Activated T-helper 2 cell treated with anti-CD3 and anti-CD28 coated beads, Interferon-gamma antibody, Interleukin-2, Interleukin-4, amounts not matched to agents 10 μg/mL and 5 μg/mL and 100 μg/mL, durations not matched to agents 14 hours and 24 hours and 36 hours (primary cell): ENCODE measurements at regions of chr16 and their contacts with region 1.

Region 1: DNA sequence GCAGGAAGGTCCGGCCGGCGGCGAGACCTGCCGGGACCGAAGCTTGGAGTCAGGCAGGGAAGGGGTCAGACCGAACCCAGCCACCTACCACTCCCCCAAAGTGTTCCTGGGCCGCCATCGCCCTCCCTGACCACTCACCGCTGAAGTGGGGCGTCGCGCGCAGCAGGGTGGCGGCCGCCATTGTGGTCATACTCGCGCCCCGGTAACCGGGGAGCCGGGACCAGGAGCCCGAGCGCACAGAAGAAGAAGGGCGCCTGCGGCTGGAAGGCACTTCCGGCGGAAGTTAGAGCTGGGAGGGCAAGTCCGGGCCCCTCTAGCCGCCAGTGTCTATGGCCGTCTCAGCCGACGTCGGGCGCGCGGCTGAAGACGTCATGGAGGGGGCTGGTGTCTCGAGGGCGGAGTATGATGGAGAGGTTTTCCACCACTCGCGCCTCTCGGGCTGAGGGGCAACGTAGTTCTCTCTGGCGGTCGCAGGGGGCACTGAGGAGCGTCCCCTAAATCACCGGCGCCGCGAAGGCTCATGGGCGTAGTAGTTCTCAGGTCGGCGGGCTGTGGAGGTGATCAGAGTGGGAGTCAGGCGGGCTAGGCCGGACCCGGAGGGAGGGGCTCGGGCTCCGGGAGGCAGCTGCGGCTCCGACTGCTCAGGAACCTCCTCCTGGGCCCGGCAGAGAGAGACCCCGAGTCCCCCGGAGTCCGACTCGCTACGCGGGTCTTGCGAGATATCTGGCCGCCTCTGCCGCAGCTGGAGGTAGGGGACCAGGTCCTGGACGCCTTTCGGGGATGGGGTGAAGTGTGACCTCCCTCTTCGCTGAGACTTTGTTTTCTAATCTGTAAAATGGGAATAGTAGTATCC is at the start of gene TUFM:
- DNase-seq: peak; percentile 98
- H3K4me3 Mint-ChIP-seq: peak within 1 kb of the TSS; percentile 93
- H3K27ac Mint-ChIP-seq: peak within 1 kb of the TSS; percentile 97
- H3K4me1 Mint-ChIP-seq: peaks cover 22% of the 10 kb centered on the region
- H3K27me3 Mint-ChIP-seq: no peaks in the 10 kb centered on the region
- total RNA-seq, gene TUFM: 202 and 217 TPM in 2 replicates

Region 2: DNA sequence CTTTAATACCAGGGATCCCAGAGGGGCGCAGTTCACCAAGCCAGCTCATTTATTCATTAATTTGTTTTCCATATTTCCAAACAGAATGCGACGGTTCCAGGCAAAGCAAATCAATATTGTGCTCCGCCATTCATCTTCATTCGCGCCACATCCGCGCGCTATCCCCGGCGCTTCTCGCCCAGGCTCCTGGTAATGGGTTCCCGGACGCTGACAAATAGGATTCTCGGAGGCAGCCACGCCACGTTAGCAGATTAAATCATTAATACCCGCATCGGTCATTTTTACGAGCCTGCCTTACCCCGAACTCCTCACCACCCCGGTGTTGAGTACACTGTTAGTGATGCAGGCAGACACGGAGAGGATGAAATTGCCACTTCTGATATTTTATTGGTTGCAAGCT is 1805.6 kb before region 1 on chr16:
- intact Hi-C with region 1: no loop called
- DNase-seq: no peak
- H3K4me3 Mint-ChIP-seq: no peak overlapping the region
- H3K27ac Mint-ChIP-seq: no peak overlapping the region
- H3K4me1 Mint-ChIP-seq: no peaks in the 10 kb centered on the region
- H3K27me3 Mint-ChIP-seq: peaks cover under 1% of the 10 kb centered on the region

Region 3: DNA sequence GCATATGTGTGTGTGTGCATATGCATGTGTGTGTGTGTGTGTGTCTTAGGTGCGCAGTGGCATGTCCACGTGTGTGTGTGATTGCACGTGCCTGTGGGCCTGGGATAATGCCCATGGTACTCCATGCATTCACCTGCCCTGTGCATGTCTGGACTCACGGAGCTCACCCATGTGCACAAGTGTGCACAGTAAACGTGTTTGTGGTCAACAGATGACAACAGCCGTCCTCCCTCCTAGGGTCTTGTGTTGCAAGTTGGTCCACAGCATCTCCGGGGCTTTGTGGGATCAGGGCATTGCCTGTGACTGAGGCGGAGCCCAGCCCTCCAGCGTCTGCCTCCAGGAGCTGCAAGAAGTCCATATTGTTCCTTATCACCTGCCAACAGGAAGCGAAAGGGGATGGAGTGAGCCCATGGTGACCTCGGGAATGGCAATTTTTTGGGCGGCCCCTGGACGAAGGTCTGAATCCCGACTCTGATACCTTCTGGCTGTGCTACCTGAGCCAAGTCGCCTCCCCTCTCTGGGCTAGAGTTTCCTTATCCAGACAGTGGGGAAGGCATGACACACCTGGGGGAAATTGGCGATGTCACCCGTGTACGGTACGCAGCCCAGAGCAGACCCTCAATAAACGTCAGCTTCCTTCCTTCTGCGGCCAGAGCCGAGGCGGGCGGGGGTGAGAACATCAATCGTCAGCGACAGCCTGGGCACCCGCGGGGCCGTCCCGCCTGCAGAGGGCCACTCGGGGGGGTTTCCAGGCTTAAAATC is 1396.7 kb before region 1 on chr16:
- intact Hi-C with region 1: no loop called
- DNase-seq: no peak
- H3K4me3 Mint-ChIP-seq: no peak overlapping the region
- H3K27ac Mint-ChIP-seq: peak overlapping the region; percentile 68
- H3K4me1 Mint-ChIP-seq: peaks cover 42% of the 10 kb centered on the region
- H3K27me3 Mint-ChIP-seq: no peaks in the 10 kb centered on the region

Region 4: DNA sequence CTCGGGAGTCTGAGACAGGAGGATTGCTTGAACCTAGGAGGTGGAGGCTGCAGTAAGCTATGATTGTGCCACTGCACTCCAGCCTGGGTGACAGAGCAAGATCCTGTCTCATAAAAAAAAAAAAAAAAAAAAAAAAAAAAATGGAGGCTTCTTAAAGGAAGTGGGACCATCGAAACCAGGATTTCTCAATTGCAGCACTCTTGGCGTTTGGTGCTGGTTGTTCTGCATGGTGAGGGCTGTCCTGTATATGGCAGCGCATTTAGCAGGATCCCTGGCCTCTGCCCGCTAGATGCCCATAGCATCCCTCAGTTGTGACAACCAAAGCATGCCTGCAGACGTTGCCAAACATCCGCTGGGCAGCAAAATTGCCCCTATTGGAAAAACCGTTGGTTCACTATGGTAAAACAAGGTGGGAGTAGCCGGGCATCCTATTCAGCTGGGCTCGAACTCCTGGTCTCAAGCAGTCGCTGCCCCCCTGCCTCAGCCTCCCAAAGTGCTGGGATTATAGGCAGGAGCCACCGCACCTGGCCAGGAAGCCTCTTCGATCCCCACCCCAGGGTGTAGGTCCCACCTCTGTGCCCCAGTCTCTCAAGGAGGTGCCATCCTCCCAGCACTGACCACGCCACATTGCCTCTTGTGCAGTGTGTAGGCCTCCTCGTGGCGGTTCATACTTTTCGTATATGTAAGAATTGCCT is 367.7 kb before region 1 on chr16:
- intact Hi-C with region 1: no loop called
- DNase-seq: no peak
- H3K4me3 Mint-ChIP-seq: no peak overlapping the region
- H3K27ac Mint-ChIP-seq: no peak overlapping the region
- H3K4me1 Mint-ChIP-seq: peaks cover 2% of the 10 kb centered on the region
- H3K27me3 Mint-ChIP-seq: no peaks in the 10 kb centered on the region

Region 5: GRCh38 chr16:28491970-28492474 is 354.3 kb before region 1 on chr16 and contains the start of gene CLN3:
- intact Hi-C with region 1: loop called (anchors 1 kb)
- DNase-seq: peak; percentile 88
- H3K4me3 Mint-ChIP-seq: peak within 1 kb of the TSS; percentile 92
- H3K27ac Mint-ChIP-seq: peak within 1 kb of the TSS; percentile 99
- H3K4me1 Mint-ChIP-seq: peaks cover 41% of the 10 kb centered on the region
- H3K27me3 Mint-ChIP-seq: no peaks in the 10 kb centered on the region
- total RNA-seq, gene CLN3: 26.5 and 30.1 TPM in 2 replicates

Region 6: DNA sequence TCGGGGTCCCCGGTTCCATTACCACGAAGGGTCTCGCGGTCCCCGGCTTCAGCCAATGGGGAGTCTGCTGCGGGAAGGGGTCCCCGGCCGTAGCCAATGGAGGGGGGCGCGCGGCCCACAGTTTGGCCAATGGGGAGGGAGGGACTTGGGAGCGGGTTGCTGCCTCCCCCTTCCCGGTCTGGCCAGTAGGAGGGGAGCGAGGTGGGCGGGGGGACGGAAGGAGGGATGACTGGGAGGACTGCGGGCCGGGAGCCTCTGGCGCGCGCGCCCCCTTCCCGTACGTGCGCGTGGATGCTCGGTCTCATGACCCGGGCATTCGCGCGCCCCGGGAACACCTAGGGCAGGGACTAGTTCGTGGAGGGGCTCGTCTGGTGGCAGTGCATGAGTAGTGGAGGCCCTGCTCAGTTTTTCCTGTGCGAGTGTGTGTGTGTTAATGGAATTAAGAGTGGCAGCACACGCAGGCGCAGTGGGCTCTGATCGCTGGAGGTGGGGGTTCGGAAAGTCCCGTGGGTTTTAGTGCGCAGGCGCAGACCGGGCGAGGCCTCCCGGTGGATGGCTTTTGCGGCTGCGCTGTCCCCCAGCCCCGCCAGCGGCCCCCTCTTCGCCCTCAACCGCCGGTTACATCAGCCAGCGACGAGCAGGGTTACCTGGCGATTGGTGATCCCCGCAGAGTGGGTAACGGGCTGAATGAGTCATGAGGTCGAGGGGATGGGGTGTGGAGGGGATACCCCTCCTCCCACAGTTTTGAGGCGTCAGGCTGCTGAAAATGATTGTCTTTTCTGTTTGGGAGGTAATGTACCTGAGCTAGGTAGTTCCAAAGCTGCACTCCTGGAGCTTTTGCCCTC is 22.2 kb before region 1 on chr16:
- intact Hi-C with region 1: loop called (anchors 1 kb)
- DNase-seq: peak; percentile 93
- H3K4me3 Mint-ChIP-seq: peak overlapping the region; percentile 99
- H3K27ac Mint-ChIP-seq: peak overlapping the region; percentile 100
- H3K4me1 Mint-ChIP-seq: peaks cover 31% of the 10 kb centered on the region
- H3K27me3 Mint-ChIP-seq: no peaks in the 10 kb centered on the region

Region 7: DNA sequence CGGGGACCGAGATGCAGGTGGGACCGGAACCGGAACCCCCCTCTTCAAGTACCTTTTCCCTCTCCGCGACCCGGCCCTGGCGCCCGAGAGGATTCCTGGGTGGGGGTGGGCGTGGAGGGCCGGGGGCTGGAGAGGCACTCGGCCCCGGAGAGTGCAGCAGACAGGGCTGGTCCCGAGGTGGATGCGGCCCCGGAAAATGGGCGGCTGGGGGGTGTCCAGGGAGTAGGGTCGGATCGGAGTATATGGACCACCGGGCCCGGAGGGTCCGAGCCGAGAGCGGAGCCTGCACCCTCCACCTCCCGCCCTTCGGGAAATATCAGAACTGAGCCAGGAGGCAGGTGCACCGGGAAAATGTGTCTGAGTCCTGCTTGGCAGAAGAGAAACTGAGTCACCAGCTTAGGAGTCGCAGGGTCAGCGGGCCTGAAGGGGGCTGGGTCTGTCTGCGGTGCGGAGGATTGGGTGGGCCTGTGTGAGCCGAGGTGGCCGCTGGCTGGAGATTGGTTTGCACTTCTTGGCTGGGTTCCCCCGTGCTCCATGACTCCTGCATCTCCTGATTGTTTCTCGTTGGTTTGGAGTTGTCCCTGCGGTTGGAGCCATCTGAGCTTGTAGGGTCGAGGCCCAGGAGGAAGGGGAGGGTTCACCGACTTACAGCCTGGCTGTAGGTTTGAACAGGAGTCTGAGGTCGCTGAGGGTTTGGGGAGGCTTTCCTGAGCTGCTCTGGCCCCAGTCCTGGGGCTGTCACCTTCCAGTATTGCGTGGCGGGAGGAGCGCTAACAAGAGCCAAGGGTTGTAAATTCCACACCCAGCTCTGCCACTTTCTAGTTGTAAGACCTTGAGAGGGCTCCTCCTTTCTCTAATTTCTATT is 17.9 kb after region 1 on chr16:
- intact Hi-C with region 1: loop called (anchors 1 kb)
- DNase-seq: peak; percentile 19
- H3K4me3 Mint-ChIP-seq: peak overlapping the region; percentile 96
- H3K27ac Mint-ChIP-seq: peak overlapping the region; percentile 98
- H3K4me1 Mint-ChIP-seq: peaks cover 8% of the 10 kb centered on the region
- H3K27me3 Mint-ChIP-seq: no peaks in the 10 kb centered on the region

Region 8: GRCh38 chr16:28924732-28925385 is 78.6 kb after region 1 on chr16 and contains the start of gene RABEP2:
- intact Hi-C with region 1: loop called (anchors 5 kb)
- DNase-seq: peak; percentile 93
- H3K4me3 Mint-ChIP-seq: peak within 1 kb of the TSS; percentile 95
- H3K27ac Mint-ChIP-seq: peak within 1 kb of the TSS; percentile 99
- H3K4me1 Mint-ChIP-seq: peaks cover 11% of the 10 kb centered on the region
- H3K27me3 Mint-ChIP-seq: no peaks in the 10 kb centered on the region
- total RNA-seq, gene RABEP2: 20.6 and 24.2 TPM in 2 replicates

Region 9: DNA sequence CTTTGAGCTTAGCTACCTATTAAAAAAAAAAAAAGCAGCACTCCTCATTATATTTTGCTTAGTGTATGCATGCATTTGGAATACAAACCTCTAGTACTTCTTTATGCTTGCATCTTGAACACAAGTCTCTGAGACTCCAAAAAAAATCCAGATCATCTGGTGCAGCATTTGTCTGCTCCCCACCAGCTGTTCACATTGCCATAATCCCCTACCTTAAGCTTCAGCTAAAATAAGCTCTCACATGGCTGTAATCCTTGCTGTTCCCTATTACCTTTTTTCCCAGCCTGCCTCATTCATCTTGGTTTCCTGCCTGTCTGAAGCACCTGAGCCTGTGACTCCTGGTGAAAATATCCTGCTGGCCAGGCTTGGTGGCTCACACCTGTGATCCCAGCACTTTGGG is 97.0 kb after region 1 on chr16:
- intact Hi-C with region 1: loop called (anchors 1 kb)
- DNase-seq: no peak
- H3K4me3 Mint-ChIP-seq: no peak overlapping the region
- H3K27ac Mint-ChIP-seq: no peak overlapping the region
- H3K4me1 Mint-ChIP-seq: peaks cover 13% of the 10 kb centered on the region
- H3K27me3 Mint-ChIP-seq: no peaks in the 10 kb centered on the region

Region 10: GRCh38 chr16:28950648-28951409 is 104.5 kb after region 1 on chr16 and contains the start of gene NFATC2IP:
- intact Hi-C with region 1: loop called (anchors 1 kb)
- DNase-seq: peak; percentile 100
- H3K4me3 Mint-ChIP-seq: peak within 1 kb of the TSS; percentile 92
- H3K27ac Mint-ChIP-seq: peak within 1 kb of the TSS; percentile 91
- H3K4me1 Mint-ChIP-seq: peaks cover 18% of the 10 kb centered on the region
- H3K27me3 Mint-ChIP-seq: no peaks in the 10 kb centered on the region
- total RNA-seq, gene NFATC2IP: 98.3 and 106 TPM in 2 replicates

Region 11: GRCh38 chr16:29129514-29129913 is 283.2 kb after region 1 on chr16:
- intact Hi-C with region 1: no loop called
- DNase-seq: no peak
- H3K4me3 Mint-ChIP-seq: no peak overlapping the region
- H3K27ac Mint-ChIP-seq: no peak overlapping the region
- H3K4me1 Mint-ChIP-seq: peaks cover 9% of the 10 kb centered on the region
- H3K27me3 Mint-ChIP-seq: no peaks in the 10 kb centered on the region